ENCODE measurements at regions of chr20 and their contacts with region 1.

Region 1: DNA sequence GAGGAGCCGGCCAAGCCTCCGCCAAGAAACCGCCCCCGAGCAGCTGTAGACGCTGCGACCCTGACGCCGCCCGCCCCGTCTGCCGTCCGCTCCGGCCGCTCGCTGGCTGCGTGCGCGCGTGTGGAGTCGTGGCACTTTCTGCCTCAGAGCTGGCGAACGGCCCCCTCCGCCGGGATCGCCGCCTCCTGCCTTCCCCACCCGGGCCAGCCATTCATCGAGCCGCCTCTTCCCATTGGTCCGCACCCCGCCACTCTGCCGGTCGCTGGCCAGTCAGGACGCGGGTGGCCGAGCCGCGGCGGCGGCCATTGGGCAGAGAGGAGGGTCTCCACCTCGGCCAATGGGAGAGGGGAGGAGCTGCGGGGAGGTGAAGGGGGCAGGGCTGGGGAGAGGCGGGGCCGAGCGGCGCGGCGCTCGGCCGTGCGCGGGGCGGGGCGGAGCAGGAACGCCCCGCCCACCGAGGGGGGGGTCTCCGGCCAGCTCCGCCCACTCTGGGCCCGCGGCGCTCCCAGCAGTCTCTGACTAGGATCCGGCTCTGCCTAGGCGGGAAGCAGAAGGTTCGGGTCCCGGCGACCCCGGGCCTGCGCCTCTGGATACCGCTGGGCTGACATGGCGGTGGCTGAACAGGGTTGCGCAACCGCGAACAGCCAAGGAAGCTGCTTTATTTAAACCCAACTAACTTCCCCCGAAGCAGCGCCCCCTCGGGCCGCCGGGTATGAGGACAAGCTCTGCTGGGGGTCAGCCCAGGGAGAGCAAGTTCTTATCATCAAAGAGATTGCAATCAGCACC is at the start of gene RRBP1:
- H3K4me3 Mint-ChIP-seq: peak within 1 kb of the TSS; percentile 79
- H3K27ac Mint-ChIP-seq: peak within 1 kb of the TSS; percentile 90
- H3K4me1 Mint-ChIP-seq: peaks cover 31% of the 10 kb centered on the region
- H3K27me3 Mint-ChIP-seq: peaks cover 19% of the 10 kb centered on the region

Region 2: DNA sequence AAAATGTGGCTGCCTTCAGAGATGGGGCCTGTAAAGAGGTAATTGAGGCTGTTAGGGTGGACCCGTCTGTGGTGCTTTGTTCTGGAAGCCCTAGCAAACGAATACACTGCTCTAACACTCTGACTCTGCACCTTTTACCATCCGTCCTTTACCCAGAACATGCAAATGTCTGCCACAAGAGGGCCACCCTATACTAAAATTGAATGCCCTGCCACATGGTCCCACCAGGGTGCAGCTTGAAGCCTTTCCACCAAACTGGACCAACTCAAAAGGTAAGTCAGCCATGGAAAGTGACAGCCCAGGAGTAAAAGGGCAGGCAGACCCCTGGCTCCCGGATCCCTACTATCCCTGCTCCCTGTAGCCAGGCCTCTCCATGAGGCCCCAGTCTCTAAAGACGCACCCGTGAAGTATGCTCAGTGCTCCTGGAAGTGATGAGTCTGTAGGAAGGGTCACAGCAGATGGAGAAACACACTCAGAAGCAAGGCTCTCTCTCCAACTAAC is 145.3 kb before region 1 on chr20:
- intact Hi-C with region 1: loop called (anchors 10 kb)
- H3K4me3 Mint-ChIP-seq: no peak overlapping the region
- H3K27ac Mint-ChIP-seq: no peak overlapping the region
- H3K4me1 Mint-ChIP-seq: peaks cover 5% of the 10 kb centered on the region
- H3K27me3 Mint-ChIP-seq: peaks cover 8% of the 10 kb centered on the region

Region 3: DNA sequence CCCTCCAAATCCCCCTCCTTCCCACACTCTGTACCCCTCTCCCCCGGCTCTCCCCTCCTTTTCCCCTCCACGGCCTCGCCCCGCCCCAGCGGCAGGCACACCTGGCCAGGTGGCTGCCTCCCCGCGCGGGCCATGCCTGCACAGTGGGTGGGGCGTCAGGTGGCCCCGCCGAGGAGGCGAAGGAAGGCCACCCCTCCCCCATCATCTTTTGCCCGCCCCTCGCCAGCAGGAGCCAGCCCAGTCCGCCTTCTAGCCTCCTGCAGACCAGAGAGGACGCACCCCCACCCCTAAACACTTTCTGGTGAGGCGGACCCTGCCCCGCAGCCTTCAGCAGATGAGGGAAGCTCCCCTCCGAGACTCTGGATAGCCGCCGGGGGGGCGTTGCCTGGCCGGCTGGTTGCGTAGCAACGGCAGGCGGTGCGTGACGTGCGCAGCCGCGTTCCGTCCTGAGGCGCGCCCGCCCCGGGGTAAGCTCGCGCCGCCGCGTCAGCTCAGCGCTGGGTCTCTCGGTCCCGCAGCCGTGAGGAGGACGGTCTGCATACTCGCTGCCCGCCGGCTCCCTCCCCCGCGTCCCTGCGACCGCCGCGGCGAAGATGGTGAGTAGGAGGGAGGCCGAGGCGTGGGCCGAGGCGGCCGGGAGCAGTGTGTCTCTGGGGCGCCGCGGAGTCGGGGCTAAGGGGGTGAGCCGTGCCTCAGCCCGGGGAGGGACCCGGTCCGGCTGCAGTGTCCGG is 112.5 kb before region 1 on chr20 and contains the start of gene DSTN:
- intact Hi-C with region 1: loop called (anchors 5 kb)
- H3K4me3 Mint-ChIP-seq: peak within 1 kb of the TSS; percentile 93
- H3K27ac Mint-ChIP-seq: peak within 1 kb of the TSS; percentile 81
- H3K4me1 Mint-ChIP-seq: peaks cover 26% of the 10 kb centered on the region
- H3K27me3 Mint-ChIP-seq: peaks cover 26% of the 10 kb centered on the region

Region 4: DNA sequence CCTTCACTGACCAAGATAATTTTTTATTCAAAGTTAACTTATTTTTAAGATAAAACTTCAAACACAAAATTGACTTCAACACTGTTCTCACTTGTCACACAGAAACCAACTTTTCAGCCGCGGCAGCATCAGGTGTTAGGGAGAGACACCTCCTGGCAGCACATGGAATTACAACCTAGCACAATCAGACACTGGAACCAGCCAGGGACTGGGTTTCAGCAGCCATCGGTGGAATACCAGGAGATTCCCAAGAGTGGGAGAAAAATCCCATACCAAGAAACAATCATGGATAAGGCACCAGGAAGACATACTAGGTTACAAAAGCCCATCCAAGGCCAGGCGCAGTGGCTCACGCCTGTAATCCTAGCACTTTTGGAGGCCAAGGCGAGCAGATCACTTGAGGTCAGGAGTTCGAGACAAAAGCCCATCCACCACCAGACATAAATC is 216.3 kb after region 1 on chr20:
- intact Hi-C with region 1: loop called (anchors 2 kb)
- H3K4me3 Mint-ChIP-seq: no peak overlapping the region
- H3K27ac Mint-ChIP-seq: no peak overlapping the region
- H3K4me1 Mint-ChIP-seq: peaks cover 24% of the 10 kb centered on the region
- H3K27me3 Mint-ChIP-seq: peaks cover 42% of the 10 kb centered on the region

Region 5: GRCh38 chr20:17925141-17925939 is 243.0 kb after region 1 on chr20:
- intact Hi-C with region 1: no loop called
- H3K4me3 Mint-ChIP-seq: no peak overlapping the region
- H3K27ac Mint-ChIP-seq: no peak overlapping the region
- H3K4me1 Mint-ChIP-seq: peaks cover 17% of the 10 kb centered on the region
- H3K27me3 Mint-ChIP-seq: peaks cover 18% of the 10 kb centered on the region

Region 6: DNA sequence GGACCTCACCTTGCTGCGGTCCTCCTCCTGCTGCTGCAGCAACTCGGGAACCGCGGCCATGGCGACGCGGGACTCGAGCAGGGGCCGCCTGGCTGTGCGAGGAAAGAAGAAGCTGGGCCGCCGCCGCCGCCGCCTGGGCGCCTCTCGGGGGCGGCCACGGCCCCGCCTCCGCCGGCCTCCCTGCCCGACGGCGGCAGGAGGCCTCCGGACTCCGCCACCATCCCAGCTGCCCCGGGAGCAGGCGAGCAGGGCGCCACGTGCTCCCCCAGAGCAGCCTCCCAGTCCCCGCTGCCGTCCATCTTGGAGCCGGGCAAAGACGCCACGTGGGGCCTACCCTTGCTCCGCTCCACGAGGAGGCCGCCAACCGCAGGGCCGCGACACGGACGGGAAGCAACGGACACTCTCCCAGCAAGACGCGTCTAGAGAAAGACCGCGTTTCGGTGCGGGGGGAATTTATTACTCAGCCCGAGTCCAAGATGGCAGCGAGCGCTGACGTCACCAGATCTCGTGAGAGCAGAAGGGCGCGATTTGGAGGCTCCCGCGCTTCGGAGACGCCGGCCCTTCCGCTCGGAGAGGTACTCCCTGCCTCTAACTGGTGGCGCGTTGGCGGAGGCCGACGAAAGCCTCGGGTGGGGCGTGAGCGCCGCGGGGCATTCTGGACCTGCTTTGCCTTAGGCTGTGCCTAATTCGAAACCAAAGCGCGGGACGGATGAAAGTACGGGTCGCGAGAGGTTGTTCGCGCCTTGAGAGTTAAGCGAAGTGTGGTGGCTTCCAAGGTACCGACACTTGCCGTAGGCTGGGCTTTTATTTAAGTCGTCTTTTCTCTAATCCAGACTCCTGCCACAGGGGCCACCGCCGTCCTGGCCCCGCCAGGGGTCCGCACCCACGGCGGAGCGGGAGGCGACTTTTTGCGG is 286.3 kb after region 1 on chr20 and contains the starts of genes MGME1 and SNX5:
- intact Hi-C with region 1: loop called (anchors 1 kb)
- H3K4me3 Mint-ChIP-seq: peak within 1 kb of the TSS; percentile 90
- H3K27ac Mint-ChIP-seq: peak within 1 kb of the TSS; percentile 98
- H3K4me1 Mint-ChIP-seq: peaks cover 60% of the 10 kb centered on the region
- H3K27me3 Mint-ChIP-seq: no peaks in the 10 kb centered on the region

Region 7: GRCh38 chr20:17995967-17996819 is 313.9 kb after region 1 on chr20:
- intact Hi-C with region 1: loop called (anchors 10 kb)
- H3K4me3 Mint-ChIP-seq: no peak overlapping the region
- H3K27ac Mint-ChIP-seq: no peak overlapping the region
- H3K4me1 Mint-ChIP-seq: peaks cover 6% of the 10 kb centered on the region
- H3K27me3 Mint-ChIP-seq: no peaks in the 10 kb centered on the region